Naive thymus-derived CD4-positive, alpha-beta T cell (primary cell): ENCODE measurements at regions of chr3 and their contacts with region 1.

Region 1: DNA sequence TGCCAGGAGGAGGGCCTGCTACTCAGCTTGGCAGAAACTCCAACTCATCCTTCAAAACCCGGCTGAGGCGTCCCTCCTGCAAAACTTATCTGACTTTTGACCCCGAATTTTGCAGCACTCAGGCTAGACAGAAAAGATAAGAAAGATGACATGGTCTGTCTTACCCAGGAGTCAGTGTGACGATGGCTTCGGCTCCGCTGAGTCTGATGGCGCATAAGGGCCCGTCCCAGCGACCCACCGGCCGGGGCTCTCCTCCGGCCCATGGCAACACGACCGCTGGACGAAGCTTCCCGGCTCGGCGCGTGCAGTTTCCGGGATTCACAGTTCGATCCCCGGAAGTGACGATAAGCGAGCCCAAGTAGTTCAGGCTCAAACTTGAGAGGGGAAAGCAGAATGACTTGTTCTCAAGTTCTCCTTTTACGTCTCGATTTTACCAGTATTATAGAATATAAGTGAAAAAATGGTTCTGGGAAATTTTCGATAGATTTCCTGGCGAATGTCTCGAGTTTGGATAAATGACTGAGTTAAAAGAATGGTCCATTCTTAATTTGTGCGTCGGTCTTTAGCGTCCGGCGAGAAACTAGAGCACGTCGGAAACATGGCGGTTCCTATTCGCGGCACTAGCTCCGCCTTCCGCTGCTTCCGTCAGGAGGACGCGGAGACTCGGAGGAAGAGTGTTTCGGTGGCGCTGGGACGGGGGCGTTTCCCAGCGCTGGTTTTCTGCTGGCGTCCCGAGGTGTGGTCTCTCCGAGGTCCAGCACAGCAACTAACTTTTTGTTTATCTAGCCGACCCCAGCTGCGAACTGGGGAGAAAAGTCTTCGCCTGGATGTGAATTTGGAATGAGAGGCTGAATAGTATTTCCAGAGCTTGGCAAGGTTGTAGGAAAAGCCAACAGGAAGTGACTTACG is at the start of gene LSG1:
- DNase-seq: peak; percentile 68 to 92 (median 87)
- ATAC-seq: peak; percentile 98
- H3K4me3 ChIP-seq: peak within 1 kb of the TSS; percentile 96
- H3K4me3 Mint-ChIP-seq: peak within 1 kb of the TSS; percentile 95 to 100 (median 98)
- H3K27ac ChIP-seq: peak within 1 kb of the TSS; percentile 90
- H3K27ac Mint-ChIP-seq: peak within 1 kb of the TSS; percentile 96 to 99 (median 98)
- H3K4me1 ChIP-seq: peaks cover 11 to 19% of the 10 kb centered on the region in 2 donors
- H3K4me1 Mint-ChIP-seq: peaks cover 21 to 52% (median 38%) of the 10 kb centered on the region in 7 donors
- H3K27me3 ChIP-seq: no peaks in the 10 kb centered on the region
- H3K27me3 Mint-ChIP-seq: no peaks in the 10 kb centered on the region
- total RNA-seq, gene LSG1: 33.5 to 59.2 (median 54.9) TPM

Region 2: DNA sequence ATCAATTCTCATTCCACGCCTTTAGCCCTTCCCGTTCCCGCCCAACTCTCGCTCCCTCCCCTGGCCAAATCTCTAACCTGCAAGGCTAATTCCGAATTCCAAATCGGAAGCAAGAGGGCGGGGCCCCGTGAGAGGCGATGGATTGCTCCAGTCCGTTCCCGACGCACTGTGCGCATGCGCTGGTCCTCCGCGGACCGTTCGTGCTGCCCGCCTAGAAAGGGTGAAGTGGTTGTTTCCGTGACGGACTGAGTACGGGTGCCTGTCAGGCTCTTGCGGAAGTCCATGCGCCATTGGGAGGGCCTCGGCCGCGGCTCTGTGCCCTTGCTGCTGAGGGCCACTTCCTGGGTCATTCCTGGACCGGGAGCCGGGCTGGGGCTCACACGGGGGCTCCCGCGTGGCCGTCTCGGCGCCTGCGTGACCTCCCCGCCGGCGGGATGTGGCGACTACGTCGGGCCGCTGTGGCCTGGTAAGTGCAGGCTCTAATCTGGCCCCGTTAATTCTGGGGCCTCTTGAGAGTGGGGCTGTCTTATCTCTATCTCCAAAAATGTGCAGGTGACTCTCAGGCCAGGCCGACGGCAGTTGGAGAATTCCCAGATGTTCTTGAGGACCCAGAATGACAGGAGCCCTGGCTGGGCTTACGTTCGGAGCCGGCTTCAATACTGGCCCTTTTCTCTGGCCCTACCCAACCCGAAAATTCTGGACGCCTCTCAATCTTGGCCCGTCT is 1079.0 kb before region 1 on chr3 and contains the start of gene OPA1:
- CTCF ChIA-PET with region 1: no interaction called
- POLR2A ChIA-PET with region 1: no interaction called
- intact Hi-C with region 1: loop called in 1 of 2 experiments (anchors 1 kb)
- DNase-seq: peak; percentile 73 to 91 (median 80)
- ATAC-seq: peak; percentile 96
- H3K4me3 ChIP-seq: peak within 1 kb of the TSS; percentile 78
- H3K4me3 Mint-ChIP-seq: peak within 1 kb of the TSS; percentile 93 to 98 (median 96)
- H3K27ac ChIP-seq: peak within 1 kb of the TSS; percentile 82
- H3K27ac Mint-ChIP-seq: peak within 1 kb of the TSS; percentile 92 to 98 (median 95)
- H3K4me1 ChIP-seq: peaks cover 18 to 20% of the 10 kb centered on the region in 2 donors
- H3K4me1 Mint-ChIP-seq: peaks cover 40 to 70% (median 59%) of the 10 kb centered on the region in 7 donors
- H3K27me3 ChIP-seq: no peaks in the 10 kb centered on the region
- H3K27me3 Mint-ChIP-seq: no peaks in the 10 kb centered on the region
- total RNA-seq, gene OPA1: 50.7 to 70.0 (median 59.4) TPM

Region 3: GRCh38 chr3:194583604-194584318 is 88.4 kb before region 1 on chr3:
- CTCF ChIA-PET with region 1: no interaction called
- POLR2A ChIA-PET with region 1: interaction called, 8 read pairs
- intact Hi-C with region 1: loop called (anchors 1 to 5 kb)
- DNase-seq: peak; percentile 87 to 98 (median 92)
- ATAC-seq: peak; percentile 92
- H3K4me3 ChIP-seq: peak overlapping the region; percentile 81
- H3K4me3 Mint-ChIP-seq: peak overlapping the region; percentile 84 to 96 (median 93)
- H3K27ac ChIP-seq: peak overlapping the region; percentile 79
- H3K27ac Mint-ChIP-seq: peak overlapping the region; percentile 93 to 99 (median 96)
- H3K4me1 ChIP-seq: peaks cover 8 to 11% of the 10 kb centered on the region in 2 donors
- H3K4me1 Mint-ChIP-seq: peaks cover 8 to 30% (median 12%) of the 10 kb centered on the region in 7 donors
- H3K27me3 ChIP-seq: no peaks in the 10 kb centered on the region
- H3K27me3 Mint-ChIP-seq: no peaks in the 10 kb centered on the region

Region 4: DNA sequence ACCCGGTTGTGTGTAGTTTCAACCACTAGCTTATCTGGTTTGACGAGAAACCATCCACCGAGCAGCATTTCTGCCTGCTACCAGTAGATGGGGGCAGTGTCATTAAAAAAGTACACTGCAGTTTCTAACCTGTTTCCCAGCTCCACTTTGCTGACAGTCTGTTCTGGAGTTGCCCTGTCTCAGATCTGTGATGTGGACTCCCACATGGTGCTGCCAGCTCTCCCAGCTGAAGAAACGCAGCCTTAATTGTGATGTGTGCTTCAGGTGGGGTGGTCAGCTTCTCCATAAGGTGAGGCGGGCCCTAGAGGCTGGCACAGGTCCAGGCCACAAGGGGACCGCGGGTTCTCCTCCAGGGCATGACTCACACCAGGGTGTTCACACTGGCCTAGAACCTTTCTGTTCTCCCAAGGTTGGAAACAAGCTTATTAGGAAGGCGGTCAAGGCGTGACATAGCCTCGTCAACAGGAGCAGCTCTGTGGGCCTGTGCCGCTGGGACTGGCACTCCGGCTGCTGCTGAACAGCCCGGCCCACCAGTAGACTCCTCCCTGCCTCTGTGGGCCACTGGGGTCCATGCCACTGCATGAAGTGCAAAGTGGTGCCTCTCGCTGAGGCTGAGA is 10.6 kb after region 1 on chr3:
- CTCF ChIA-PET with region 1: interaction called, 50 read pairs
- POLR2A ChIA-PET with region 1: interaction called, 69 read pairs
- intact Hi-C with region 1: loop called (anchors 1 to 2 kb)
- DNase-seq: peak; percentile 33 to 75 (median 60)
- ATAC-seq: peak; percentile 77
- H3K4me3 ChIP-seq: no peak overlapping the region
- H3K4me3 Mint-ChIP-seq: peak overlapping the region in 2 of 10 donors; percentile 12 to 25
- H3K27ac ChIP-seq: no peak overlapping the region
- H3K27ac Mint-ChIP-seq: peak overlapping the region in 1 of 9 donors; percentile 25
- H3K4me1 ChIP-seq: peaks cover 12 to 14% of the 10 kb centered on the region in 2 donors
- H3K4me1 Mint-ChIP-seq: peaks cover 10 to 41% (median 28%) of the 10 kb centered on the region in 7 donors
- H3K27me3 ChIP-seq: no peaks in the 10 kb centered on the region
- H3K27me3 Mint-ChIP-seq: peaks cover 0 to 37% (median 0%) of the 10 kb centered on the region in 5 donors

Region 5: DNA sequence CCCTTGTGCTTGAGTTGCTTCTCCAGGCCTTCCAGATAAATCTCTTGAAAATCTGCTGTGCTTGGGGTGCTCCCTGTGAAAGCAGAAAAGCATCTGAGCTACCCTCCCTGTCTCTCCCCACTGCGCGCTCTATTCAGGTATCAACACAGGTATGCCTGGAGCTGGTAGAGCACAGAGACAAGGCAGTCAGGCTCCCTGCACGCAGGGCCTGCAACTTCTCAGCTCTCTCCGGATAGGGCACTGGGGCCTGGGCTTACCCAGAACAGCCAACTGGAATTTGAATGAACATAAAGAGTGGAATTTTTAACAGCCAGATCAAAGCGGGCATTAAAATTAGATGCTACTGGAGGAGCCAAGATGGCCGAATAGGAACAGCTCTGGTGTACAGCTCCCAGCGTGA is 415.2 kb after region 1 on chr3:
- CTCF ChIA-PET with region 1: no interaction called
- POLR2A ChIA-PET with region 1: no interaction called
- intact Hi-C with region 1: loop called in 1 of 2 experiments (anchors 5 kb)
- DNase-seq: peak in 1 of 9 donors; percentile 7
- ATAC-seq: no peak
- H3K4me3 ChIP-seq: no peak overlapping the region
- H3K4me3 Mint-ChIP-seq: peak overlapping the region; percentile 53 to 83 (median 78)
- H3K27ac ChIP-seq: no peak overlapping the region
- H3K27ac Mint-ChIP-seq: peak overlapping the region; percentile 9 to 94 (median 73)
- H3K4me1 ChIP-seq: no peaks in the 10 kb centered on the region
- H3K4me1 Mint-ChIP-seq: peaks cover 3 to 13% (median 10%) of the 10 kb centered on the region in 7 donors
- H3K27me3 ChIP-seq: no peaks in the 10 kb centered on the region
- H3K27me3 Mint-ChIP-seq: peaks cover 0 to 6% (median 0%) of the 10 kb centered on the region in 5 donors

Region 6: GRCh38 chr3:195259475-195260279 is 587.5 kb after region 1 on chr3:
- CTCF ChIA-PET with region 1: interaction called, 4 read pairs
- POLR2A ChIA-PET with region 1: interaction called, 11 read pairs
- intact Hi-C with region 1: loop called (anchors 1 kb)
- DNase-seq: peak; percentile 80 to 90 (median 84)
- ATAC-seq: peak; percentile 94
- H3K4me3 ChIP-seq: peak overlapping the region; percentile 36
- H3K4me3 Mint-ChIP-seq: peak overlapping the region; percentile 32 to 84 (median 64)
- H3K27ac ChIP-seq: peak overlapping the region; percentile 73
- H3K27ac Mint-ChIP-seq: peak overlapping the region in 7 of 9 donors; percentile 46 to 88 (median 84)
- H3K4me1 ChIP-seq: peaks cover 17 to 19% of the 10 kb centered on the region in 2 donors
- H3K4me1 Mint-ChIP-seq: peaks cover 13 to 24% (median 19%) of the 10 kb centered on the region in 7 donors
- H3K27me3 ChIP-seq: no peaks in the 10 kb centered on the region
- H3K27me3 Mint-ChIP-seq: no peaks in the 10 kb centered on the region

Region 7: DNA sequence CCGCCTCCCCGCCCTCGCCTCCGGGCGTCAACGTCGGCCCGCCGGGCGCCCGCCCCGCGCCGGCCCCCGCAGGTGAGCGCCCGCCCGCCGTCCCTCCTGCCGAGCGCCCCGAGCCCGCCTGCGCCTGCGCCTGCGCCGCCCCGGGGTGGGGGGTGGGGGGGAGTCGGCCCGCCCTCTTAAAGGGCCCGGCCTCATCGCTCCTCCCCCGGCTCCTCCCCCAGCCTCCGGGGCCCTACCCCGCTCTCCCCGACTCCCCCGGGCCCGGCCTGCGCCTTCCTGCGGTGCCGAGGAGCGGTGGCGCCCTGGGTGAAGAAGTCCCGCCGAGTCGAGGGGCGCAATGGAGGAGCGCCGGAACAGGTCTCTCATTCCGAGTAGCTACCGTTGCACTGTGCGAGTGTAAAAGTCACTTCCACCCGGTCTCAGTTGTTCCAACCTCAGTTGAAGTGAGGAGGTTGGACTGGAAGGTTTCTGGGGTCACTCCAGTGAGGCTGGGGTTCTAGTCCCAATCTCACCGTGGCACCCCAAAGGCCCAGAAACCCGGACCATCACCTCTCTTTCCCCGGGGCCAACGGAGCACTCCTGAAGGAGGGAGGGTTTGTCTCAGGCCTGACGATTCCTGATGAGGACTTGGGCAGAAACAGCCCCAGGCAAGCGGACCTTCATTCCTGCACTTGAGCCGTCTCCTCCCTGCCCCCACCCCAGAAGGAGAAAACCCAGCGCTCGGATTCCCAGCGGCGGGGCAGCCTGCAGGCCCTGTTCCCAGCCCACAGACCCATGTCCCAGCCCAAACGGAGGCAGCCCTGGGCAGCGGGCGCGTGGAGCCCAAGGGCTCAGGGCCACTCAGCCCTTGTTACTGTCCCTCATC is 1237.7 kb after region 1 on chr3:
- CTCF ChIA-PET with region 1: no interaction called
- POLR2A ChIA-PET with region 1: no interaction called
- intact Hi-C with region 1: loop called in 1 of 2 experiments (anchors 5 kb)
- DNase-seq: peak; percentile 82 to 93 (median 87)
- ATAC-seq: peak; percentile 81
- H3K4me3 ChIP-seq: peak overlapping the region; percentile 54
- H3K4me3 Mint-ChIP-seq: peak overlapping the region; percentile 40 to 97 (median 70)
- H3K27ac ChIP-seq: peak overlapping the region; percentile 68
- H3K27ac Mint-ChIP-seq: peak overlapping the region in 6 of 9 donors; percentile 10 to 90 (median 68)
- H3K4me1 ChIP-seq: peaks cover 26 to 27% of the 10 kb centered on the region in 2 donors
- H3K4me1 Mint-ChIP-seq: peaks cover 25 to 39% (median 33%) of the 10 kb centered on the region in 7 donors
- H3K27me3 ChIP-seq: no peaks in the 10 kb centered on the region
- H3K27me3 Mint-ChIP-seq: no peaks in the 10 kb centered on the region